HAP-1 (cell line): ENCODE measurements at regions of chr2 and their contacts with region 1.

Region 1: GRCh38 chr2:73736855-73737779 is at the start of gene TPRKB:
- DNase-seq: peak; percentile 98 to 99
- H3K4me3 ChIP-seq: peak within 1 kb of the TSS; percentile 80
- H3K4me1 ChIP-seq: peaks cover 14% of the 10 kb centered on the region
- H3K27me3 ChIP-seq: no peaks in the 10 kb centered on the region

Region 2: DNA sequence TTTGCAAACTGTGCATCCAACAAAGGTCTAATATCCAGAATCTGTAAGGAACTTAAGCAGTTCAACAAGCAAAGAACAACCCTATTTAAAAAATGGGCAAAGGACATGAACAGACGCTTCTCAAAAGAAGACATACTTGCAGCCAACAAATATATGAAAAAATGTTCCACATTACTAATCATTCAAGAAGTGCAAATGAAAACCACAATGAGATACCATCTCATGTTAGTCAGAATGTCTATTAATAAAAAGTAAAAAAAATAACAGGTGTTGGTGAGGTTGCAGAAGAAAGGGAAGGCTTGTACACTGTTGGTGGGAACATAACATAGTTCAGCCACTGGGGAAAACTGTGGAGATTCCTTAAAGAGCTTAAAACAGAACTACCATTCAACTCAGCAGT is 221.1 kb before region 1 on chr2:
- in situ Hi-C with region 1: no loop called
- DNase-seq: no peak
- H3K4me3 ChIP-seq: no peak overlapping the region
- H3K4me1 ChIP-seq: no peaks in the 10 kb centered on the region
- H3K27me3 ChIP-seq: no peaks in the 10 kb centered on the region

Region 3: GRCh38 chr2:74458132-74458925 is 721.2 kb after region 1 on chr2 and contains the start of gene WBP1:
- in situ Hi-C with region 1: loop called (anchors 10 kb)
- DNase-seq: peak; percentile 99 to 100
- H3K4me3 ChIP-seq: peak within 1 kb of the TSS; percentile 71
- H3K4me1 ChIP-seq: peaks cover 16% of the 10 kb centered on the region
- H3K27me3 ChIP-seq: no peaks in the 10 kb centered on the region